ENCODE measurements at regions of chr6 and their contacts with region 1.

Region 1: GRCh38 chr6:157314705-157315321 is 8.5 kb downstream of the TMEM242 start:
- DNase-seq: peak in 2 of 5 donors; percentile 50 to 52
- H3K4me3 ChIP-seq: no peak overlapping the region
- H3K4me3 Mint-ChIP-seq: no peak overlapping the region
- H3K27ac ChIP-seq: no peak overlapping the region
- H3K27ac Mint-ChIP-seq: peak overlapping the region in 2 of 8 donors; percentile 34 to 65
- H3K4me1 ChIP-seq: no peaks in the 10 kb centered on the region
- H3K4me1 Mint-ChIP-seq: peaks cover 6 to 7% (median 7%) of the 10 kb centered on the region in 3 donors
- H3K27me3 ChIP-seq: no peaks in the 10 kb centered on the region
- H3K27me3 Mint-ChIP-seq: no peaks in the 10 kb centered on the region

Region 2: GRCh38 chr6:157597446-157598312 is 282.9 kb after region 1 on chr6:
- CTCF ChIA-PET with region 1: interaction called, 11 read pairs
- POLR2A ChIA-PET with region 1: no interaction called
- DNase-seq: peak in 4 of 5 donors; percentile 17 to 59 (median 20)
- H3K4me3 ChIP-seq: no peak overlapping the region
- H3K4me3 Mint-ChIP-seq: no peak overlapping the region
- H3K27ac ChIP-seq: no peak overlapping the region
- H3K27ac Mint-ChIP-seq: peak overlapping the region in 5 of 8 donors; percentile 24 to 62 (median 48)
- H3K4me1 ChIP-seq: no peaks in the 10 kb centered on the region
- H3K4me1 Mint-ChIP-seq: peaks cover 12 to 16% (median 16%) of the 10 kb centered on the region in 3 donors
- H3K27me3 ChIP-seq: no peaks in the 10 kb centered on the region
- H3K27me3 Mint-ChIP-seq: no peaks in the 10 kb centered on the region

Region 3: DNA sequence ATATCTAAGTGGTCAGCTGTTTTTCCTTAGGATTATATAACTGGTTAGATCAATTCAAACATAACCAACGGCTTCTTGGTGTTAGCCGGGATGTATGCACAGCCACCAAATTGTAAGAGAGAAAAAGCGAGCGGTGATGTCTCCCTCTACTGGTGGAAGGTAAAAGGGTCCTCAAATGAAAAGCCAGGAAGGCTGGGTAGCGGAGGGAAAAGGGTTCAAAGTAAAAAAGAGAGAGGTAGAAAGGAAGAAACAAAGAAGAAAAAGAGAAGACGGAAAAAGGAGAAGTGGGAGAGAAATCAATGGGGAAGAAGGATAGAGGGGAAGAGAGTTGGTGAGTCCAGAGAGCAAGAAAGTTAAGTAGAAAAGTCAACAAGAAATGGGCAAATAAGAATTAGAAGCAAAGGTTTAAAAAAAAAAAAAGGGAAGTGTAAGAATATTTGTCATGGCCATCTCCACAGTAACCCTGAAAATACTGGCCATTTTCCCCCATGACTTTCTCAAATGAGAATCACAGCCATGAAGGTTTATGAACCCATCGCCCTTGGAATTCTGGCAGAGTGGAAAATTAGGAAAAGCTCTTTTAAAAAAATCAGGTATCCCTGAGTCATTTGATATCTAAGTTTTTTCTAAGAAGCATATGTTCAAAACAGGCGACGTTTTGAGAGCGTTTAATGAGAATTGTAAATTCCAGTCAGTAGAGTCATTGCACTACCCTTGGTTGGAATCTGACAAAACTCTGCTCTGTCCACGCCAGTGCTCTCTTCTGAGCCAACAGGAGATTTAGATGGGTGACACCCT is 352.6 kb after region 1 on chr6:
- CTCF ChIA-PET with region 1: interaction called, 24 read pairs
- POLR2A ChIA-PET with region 1: no interaction called
- DNase-seq: peak in 4 of 5 donors; percentile 23 to 61 (median 40)
- H3K4me3 ChIP-seq: no peak overlapping the region
- H3K4me3 Mint-ChIP-seq: no peak overlapping the region
- H3K27ac ChIP-seq: no peak overlapping the region
- H3K27ac Mint-ChIP-seq: no peak overlapping the region
- H3K4me1 ChIP-seq: peaks cover 3% of the 10 kb centered on the region
- H3K4me1 Mint-ChIP-seq: peaks cover 2 to 6% (median 5%) of the 10 kb centered on the region in 3 donors
- H3K27me3 ChIP-seq: no peaks in the 10 kb centered on the region
- H3K27me3 Mint-ChIP-seq: peaks cover 0 to 3% of the 10 kb centered on the region in 2 donors

Measured in CD8-positive, alpha-beta memory T cell (primary cell).